ENCODE measurements at regions of chr20 and their contacts with region 1.

Region 1: DNA sequence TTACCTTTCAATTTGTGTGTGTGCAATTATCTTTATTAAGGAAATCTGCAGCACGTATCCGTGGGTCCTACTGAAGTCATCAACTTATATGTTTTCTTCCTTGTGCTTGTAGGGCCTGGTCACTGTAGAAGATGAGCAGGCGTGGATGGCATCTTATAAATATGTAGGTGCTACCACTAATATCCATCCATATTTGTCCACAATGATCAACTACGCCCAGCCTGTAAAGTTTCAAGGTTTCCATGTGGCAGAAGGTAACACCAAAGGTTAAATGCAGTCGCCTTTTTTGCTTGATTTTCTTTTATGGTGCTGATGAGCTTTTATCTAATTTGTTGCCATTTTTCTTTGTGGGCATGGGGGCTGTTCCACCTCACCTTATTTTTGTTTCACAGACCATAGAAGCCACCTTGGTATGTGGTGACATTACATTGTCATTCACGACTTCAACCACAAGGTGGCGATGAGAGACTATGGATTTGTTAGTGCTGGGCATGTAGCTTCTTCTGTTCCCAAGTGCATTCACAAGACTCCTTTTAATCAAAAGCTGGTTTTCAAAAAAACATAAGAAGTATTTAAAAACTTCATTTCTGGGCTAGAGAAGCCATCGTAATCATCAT is 106.5 kb upstream of the LAMP5 start:
- DNase-seq: peak; percentile 62
- CTCF ChIP-seq: peak; percentile 81

Region 2: DNA sequence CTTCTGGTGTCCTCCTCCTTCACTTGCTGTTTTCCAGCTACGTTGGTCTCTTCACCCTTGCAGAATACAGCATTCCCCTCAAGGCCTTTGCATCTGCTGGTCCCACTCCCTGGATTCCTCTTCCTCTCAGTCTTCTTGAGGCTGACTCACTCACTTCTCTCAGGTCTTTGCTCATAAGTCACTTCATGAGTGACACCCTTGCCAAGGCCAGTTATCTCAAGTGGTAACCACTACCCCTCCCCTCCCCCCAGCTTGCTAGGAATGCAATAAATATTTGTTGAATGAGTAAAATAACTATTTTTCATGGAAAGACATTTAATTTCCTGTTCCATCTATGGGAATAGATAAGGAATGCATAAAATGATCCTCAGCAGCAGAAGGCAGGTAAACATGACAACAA is 207.3 kb before region 1 on chr20:
- in situ Hi-C with region 1: no loop called
- DNase-seq: no peak
- CTCF ChIP-seq: no peak

Region 3: DNA sequence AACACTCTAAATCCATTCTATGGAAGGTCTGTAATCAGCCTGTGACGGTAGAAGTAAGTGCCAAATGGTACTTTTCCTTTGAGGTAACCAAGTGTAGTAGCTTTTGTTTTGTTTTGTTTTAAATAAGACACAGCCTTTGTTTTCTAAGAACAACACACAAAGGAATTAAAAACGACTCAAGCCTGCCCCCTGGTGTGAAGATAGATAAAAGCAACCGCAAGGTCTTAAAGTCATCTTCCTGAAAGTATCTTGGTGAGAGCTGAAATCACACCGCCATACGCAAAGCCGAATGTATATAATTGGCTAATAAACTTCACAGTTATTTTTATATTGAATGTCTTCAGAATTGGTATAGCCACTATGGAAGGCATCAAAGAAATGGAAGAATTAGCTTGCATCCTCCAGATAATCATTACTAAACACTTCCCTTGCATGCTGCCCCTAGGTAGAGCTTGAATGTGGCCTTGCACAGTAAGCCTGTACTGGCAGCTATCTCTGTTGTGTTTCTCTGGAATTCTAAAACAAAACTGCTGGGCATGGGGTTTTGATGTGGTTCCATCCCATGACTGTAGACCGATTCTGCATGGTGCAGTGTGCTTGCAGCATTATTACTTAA is 202.1 kb after region 1 on chr20:
- in situ Hi-C with region 1: loop called (anchors 10 kb)
- DNase-seq: peak; percentile 32
- CTCF ChIP-seq: peak; percentile 56

Region 4: GRCh38 chr20:9912858-9913434 is 505.0 kb after region 1 on chr20:
- in situ Hi-C with region 1: loop called (anchors 25 kb)
- DNase-seq: peak; percentile 32
- CTCF ChIP-seq: peak; percentile 89

Region 5: DNA sequence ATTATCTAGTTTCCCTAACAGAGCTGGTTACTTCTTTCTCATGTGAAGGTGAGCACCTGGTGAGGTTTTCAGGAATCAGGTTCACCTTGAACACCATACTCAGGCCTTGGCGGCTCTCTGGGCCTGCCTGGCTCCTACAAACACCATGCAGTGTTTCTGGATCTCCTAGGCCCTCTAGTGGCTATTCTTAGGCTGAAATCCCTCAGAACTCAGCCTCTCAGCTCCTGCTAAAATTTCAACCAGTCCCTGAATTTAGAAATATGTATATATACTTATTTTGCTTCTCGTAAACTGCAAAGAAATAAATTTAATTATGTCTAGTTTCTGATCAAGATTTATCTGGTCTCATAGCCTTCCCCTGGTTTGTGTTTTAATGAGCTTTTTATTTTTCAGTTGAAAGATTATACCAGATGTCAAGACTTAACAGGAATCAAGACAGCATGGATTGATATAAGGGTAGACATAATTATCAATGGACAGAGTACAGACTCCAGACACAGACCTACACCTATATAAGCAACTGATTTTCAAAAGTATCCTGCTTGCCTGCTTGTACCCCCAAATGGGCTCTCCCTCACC is 682.8 kb after region 1 on chr20:
- in situ Hi-C with region 1: loop called (anchors 25 kb)
- DNase-seq: peak; percentile 20
- CTCF ChIP-seq: peak; percentile 58

Region 6: GRCh38 chr20:10306440-10307358 is 898.8 kb after region 1 on chr20:
- in situ Hi-C with region 1: no loop called
- DNase-seq: no peak
- CTCF ChIP-seq: no peak